Activated CD4-positive, alpha-beta T cell treated with anti-CD3 and anti-CD28 coated beads, Interleukin-2, amount 10 ng/mL, durations not matched to agents 7 days and 5 days (primary cell): ENCODE measurements at regions of chr22 and their contacts with region 1.

Region 1: GRCh38 chr22:40588726-40589125 is 47.8 kb downstream of the MRTFA start:
- DNase-seq: no peak
- H3K4me3 Mint-ChIP-seq: no peak overlapping the region
- H3K27ac Mint-ChIP-seq: no peak overlapping the region
- H3K4me1 Mint-ChIP-seq: peaks cover 10% of the 10 kb centered on the region
- H3K27me3 Mint-ChIP-seq: no peaks in the 10 kb centered on the region

Region 2: DNA sequence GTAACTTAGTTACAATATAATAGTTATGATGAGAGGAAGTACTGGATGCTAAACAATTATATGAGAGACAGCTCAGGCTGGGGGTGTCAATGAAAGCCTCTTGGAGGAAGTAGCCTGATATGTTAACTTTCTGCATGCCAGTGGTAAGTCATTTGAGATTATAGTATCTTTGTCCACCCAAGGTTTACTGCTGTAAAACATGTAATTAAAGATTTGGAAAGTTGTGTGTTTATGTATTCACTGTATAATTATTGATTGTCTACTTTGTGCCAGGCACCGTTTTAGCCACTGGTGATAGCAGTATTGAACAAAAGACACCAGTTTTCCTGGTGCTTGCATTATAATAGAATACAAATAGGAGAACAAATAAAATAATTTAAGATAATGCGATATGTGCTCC is 273.8 kb after region 1 on chr22:
- CTCF ChIA-PET with region 1: no interaction called
- POLR2A ChIA-PET with region 1: interaction called, 11 read pairs
- DNase-seq: no peak
- H3K4me3 Mint-ChIP-seq: no peak overlapping the region
- H3K27ac Mint-ChIP-seq: no peak overlapping the region
- H3K4me1 Mint-ChIP-seq: peaks cover 31% of the 10 kb centered on the region
- H3K27me3 Mint-ChIP-seq: no peaks in the 10 kb centered on the region